Common myeloid progenitor, CD34-positive (primary cell): ENCODE measurements at regions of chr11 and their contacts with region 1.

Region 1: DNA sequence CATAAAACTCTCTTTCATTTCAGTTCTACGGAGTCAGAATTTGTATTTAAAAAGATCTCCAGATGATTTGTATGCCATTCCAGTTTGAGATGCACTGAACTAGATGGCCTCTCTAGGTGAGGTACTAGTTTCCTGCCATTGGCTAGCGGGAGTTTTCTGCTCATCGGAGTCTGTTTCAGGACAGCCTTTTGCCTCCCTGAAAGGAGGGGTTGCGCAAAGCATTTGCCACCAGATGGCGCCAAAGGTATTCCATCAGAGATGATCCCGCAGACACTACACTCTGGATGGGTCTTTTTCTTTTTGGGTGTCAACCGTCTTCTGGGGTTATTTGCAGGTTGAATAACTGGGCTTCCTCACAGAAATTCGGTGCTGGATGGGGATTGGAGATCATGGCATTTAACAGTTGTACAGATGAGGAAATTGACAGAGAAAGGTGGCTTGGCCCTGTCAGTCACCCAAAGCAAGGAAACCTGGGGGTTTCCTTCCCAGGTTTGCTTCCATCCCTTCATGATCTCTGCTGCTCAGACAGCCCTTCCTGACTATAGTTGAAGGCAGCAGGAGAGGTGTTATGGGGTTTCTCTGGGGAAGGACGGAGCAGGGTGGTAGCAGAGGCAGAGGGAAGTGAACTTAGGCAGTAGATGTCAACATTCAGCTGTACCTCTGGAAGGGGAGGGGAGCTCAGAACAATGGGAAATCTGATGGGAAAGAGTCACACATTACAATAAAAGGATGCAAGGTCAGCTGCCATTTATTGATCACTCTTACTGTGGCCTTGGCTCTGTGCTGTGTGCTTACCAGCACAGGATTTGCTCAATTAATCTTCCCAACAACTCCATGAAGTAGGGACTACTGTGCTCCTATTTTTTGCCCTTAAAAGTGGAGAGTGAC is 81.6 kb downstream of the CCDC81 start:
- DNase-seq: peak; percentile 72 to 82 (median 76)
- H3K4me3 ChIP-seq: no peak overlapping the region
- H3K27ac ChIP-seq: no peak overlapping the region
- H3K4me1 ChIP-seq: no peaks in the 10 kb centered on the region
- H3K27me3 ChIP-seq: no peaks in the 10 kb centered on the region

Region 2: GRCh38 chr11:86346513-86346912 is 109.8 kb before region 1 on chr11:
- CTCF ChIA-PET with region 1: no interaction called
- POLR2A ChIA-PET with region 1: no interaction called
- DNase-seq: no peak
- H3K4me3 ChIP-seq: no peak overlapping the region
- H3K27ac ChIP-seq: no peak overlapping the region
- H3K4me1 ChIP-seq: no peaks in the 10 kb centered on the region
- H3K27me3 ChIP-seq: no peaks in the 10 kb centered on the region

Region 3: GRCh38 chr11:86442420-86442819 is 13.9 kb before region 1 on chr11:
- CTCF ChIA-PET with region 1: interaction called, 10 read pairs
- POLR2A ChIA-PET with region 1: no interaction called
- DNase-seq: no peak
- H3K4me3 ChIP-seq: no peak overlapping the region
- H3K27ac ChIP-seq: no peak overlapping the region
- H3K4me1 ChIP-seq: peaks cover 0 to 5% (median 0%) of the 10 kb centered on the region in 4 experiments
- H3K27me3 ChIP-seq: no peaks in the 10 kb centered on the region

Region 4: GRCh38 chr11:86483940-86484794 is 27.9 kb after region 1 on chr11:
- CTCF ChIA-PET with region 1: interaction called, 10 read pairs
- POLR2A ChIA-PET with region 1: no interaction called
- DNase-seq: peak in 2 of 3 donors; percentile 23 to 27
- H3K4me3 ChIP-seq: no peak overlapping the region
- H3K27ac ChIP-seq: no peak overlapping the region
- H3K4me1 ChIP-seq: peaks cover 3 to 18% (median 15%) of the 10 kb centered on the region in 4 experiments
- H3K27me3 ChIP-seq: no peaks in the 10 kb centered on the region

Region 5: DNA sequence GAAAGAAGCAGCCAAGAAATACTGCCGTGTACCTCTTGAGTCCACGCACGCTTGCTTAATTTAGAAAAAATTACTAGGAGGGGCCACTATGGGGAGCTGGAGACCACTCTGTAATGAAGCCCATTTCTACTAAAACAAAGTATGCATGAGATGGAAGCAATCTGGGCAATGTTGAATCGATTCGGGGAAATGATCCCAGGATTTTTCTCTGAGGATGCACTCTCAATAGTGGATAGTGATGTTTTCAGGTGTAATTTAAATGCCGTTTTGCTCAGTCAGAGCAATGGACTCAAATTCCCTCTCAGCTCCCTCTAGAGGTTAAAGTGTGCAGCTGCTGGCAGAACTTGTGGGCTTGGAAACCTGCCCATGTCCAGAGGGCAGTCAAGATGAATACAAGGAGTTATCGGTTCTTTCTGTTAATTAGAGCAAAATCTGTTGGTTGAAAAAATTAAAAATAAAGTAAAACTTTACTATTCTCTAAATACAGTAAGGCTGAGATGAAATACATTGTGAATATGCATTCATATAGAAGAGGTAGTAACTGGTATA is 152.0 kb after region 1 on chr11:
- CTCF ChIA-PET with region 1: interaction called, 22 read pairs
- POLR2A ChIA-PET with region 1: interaction called, 3 read pairs
- DNase-seq: peak; percentile 67 to 77 (median 77)
- H3K4me3 ChIP-seq: peak overlapping the region in 4 of 7 experiments; percentile 11 to 69 (median 52)
- H3K27ac ChIP-seq: no peak overlapping the region
- H3K4me1 ChIP-seq: peaks cover 0 to 7% (median 0%) of the 10 kb centered on the region in 4 experiments
- H3K27me3 ChIP-seq: no peaks in the 10 kb centered on the region

Region 6: GRCh38 chr11:86818466-86819192 is 362.3 kb after region 1 on chr11:
- CTCF ChIA-PET with region 1: interaction called, 33 read pairs
- POLR2A ChIA-PET with region 1: no interaction called
- DNase-seq: peak; percentile 66 to 79 (median 74)
- H3K4me3 ChIP-seq: no peak overlapping the region
- H3K27ac ChIP-seq: no peak overlapping the region
- H3K4me1 ChIP-seq: no peaks in the 10 kb centered on the region
- H3K27me3 ChIP-seq: no peaks in the 10 kb centered on the region